ENCODE measurements at regions of chr3 and their contacts with region 1.

Region 1: GRCh38 chr3:43162230-43163084 is 56.6 kb upstream of the POMGNT2 start:
- DNase-seq: no peak

Region 2: GRCh38 chr3:42961633-42962032 is 200.8 kb before region 1 on chr3:
- intact Hi-C with region 1: loop called (anchors 5 kb)
- DNase-seq: no peak

Region 3: DNA sequence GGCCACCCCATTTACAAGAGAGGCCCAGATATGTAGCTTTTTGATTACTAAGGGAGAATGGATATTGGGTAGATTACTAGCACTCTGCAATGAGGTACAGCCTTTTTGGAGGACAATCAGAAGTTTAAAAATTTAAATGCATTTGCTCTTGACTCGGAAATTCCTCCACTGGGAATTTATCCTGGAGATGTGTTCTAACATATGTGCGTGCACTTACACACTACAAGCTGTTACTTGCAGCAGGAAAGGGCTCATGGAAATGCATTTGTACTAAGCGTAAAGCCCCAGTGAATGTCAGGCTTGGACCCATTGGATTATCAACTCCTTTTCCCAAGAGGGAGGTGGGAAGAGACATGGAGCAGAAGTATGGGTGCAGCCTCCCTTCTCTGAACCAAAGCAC is 48.8 kb before region 1 on chr3:
- intact Hi-C with region 1: no loop called
- DNase-seq: no peak

Region 4: GRCh38 chr3:43223670-43224364 is 61.4 kb after region 1 on chr3:
- intact Hi-C with region 1: loop called in 1 of 2 experiments (anchors 2 kb)
- DNase-seq: no peak

Region 5: GRCh38 chr3:43503067-43503728 is 340.7 kb after region 1 on chr3:
- intact Hi-C with region 1: loop called in 1 of 2 experiments (anchors 5 kb)
- DNase-seq: no peak

Measured in posterior vena cava (tissue), 2 donors.